Caco-2 (cell line): ENCODE measurements at regions of chr4 and their contacts with region 1.

Region 1: DNA sequence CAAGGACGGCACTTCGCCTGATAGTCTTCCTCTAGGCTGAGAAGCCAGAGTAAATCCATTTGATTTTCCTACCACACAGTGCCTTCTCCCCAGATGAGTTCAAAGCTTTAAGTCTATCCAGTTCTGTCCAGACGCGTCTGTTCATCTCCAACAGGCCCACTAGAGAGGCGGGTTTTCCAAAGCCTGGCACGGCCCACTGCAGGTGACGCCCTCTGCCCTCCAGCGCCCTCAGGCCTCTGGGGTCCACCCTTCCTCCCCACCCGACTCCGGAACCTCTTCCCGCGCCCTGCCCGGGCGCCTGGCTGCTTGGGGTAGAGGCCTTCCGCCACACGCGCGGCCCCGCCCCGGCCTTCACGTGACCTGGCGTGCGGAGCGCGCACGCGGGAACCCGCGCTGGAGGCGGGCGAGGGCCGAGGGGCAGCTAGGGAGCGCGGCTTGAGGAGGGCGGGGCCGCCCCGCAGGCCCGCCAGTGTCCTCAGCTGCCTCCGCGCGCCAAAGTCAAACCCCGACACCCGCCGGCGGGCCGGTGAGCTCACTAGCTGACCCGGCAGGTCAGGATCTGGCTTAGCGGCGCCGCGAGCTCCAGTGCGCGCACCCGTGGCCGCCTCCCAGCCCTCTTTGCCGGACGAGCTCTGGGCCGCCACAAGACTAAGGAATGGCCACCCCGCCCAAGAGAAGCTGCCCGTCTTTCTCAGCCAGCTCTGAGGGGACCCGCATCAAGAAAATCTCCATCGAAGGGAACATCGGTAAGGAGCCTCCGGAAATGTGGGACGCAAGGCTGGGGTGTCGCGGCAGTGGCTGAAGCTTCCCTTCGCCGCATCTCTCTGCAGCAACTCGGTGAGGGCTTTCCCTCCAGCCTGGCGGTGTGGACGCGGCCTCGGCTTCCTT is at the start of gene DCK:
- DNase-seq: peak; percentile 93 to 96
- H3K4me3 ChIP-seq: peak within 1 kb of the TSS; percentile 83
- H3K4me3 Mint-ChIP-seq: peak within 1 kb of the TSS; percentile 91
- H3K27ac Mint-ChIP-seq: peak within 1 kb of the TSS; percentile 88
- H3K4me1 ChIP-seq: peaks cover 9% of the 10 kb centered on the region
- H3K4me1 Mint-ChIP-seq: peaks cover 18% of the 10 kb centered on the region
- H3K27me3 ChIP-seq: no peaks in the 10 kb centered on the region
- H3K27me3 Mint-ChIP-seq: no peaks in the 10 kb centered on the region
- CTCF ChIP-seq: no peak
- total RNA-seq, gene DCK: 16.3 and 19.6 TPM in 2 replicates

Region 2: GRCh38 chr4:70601422-70602039 is 391.9 kb before region 1 on chr4:
- CTCF ChIA-PET with region 1: no interaction called
- POLR2A ChIA-PET with region 1: no interaction called
- intact Hi-C with region 1: loop called (anchors 10 kb)
- DNase-seq: peak; percentile 64 to 69
- H3K4me3 ChIP-seq: no peak overlapping the region
- H3K4me3 Mint-ChIP-seq: no peak overlapping the region
- H3K27ac Mint-ChIP-seq: no peak overlapping the region
- H3K4me1 ChIP-seq: peaks cover 4% of the 10 kb centered on the region; the same call in 1 of the 2 replicates
- H3K4me1 Mint-ChIP-seq: peaks cover 6% of the 10 kb centered on the region
- H3K27me3 ChIP-seq: no peaks in the 10 kb centered on the region
- H3K27me3 Mint-ChIP-seq: no peaks in the 10 kb centered on the region
- CTCF ChIP-seq: peak; percentile 64 to 73

Region 3: DNA sequence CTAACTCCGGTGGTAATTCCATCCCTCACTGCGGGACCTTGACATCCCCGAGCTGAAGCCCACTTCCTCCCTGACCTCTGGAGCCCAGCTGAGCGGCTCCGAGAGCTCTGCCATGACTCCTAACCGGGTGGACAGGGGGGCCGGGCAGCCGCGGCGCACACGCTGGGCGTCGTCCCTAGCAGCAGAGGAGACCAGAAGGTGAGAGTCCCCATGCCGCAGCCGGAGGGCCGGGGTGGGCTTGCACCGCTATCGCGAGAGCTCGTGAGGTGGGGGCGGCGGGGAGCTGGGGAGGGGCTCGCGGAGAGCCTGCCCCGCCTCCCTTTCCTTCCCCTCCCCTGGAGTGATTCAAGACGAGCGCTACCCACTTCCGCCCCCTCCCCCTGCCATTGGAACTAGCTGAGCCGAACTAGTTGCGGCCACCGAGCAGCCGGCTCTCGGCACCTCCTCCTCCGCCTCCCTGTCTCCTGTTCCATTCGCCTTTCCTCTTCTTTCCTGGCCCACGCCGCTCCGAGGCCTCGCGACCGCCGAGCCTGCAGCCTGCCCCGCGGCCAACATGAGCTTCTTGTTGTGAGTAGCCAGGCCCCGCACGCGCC is 91.3 kb before region 1 on chr4 and contains the start of gene MOB1B:
- CTCF ChIA-PET with region 1: no interaction called
- POLR2A ChIA-PET with region 1: interaction called, 5 read pairs
- intact Hi-C with region 1: loop called (anchors 1 kb)
- DNase-seq: peak; percentile 88 to 91
- H3K4me3 ChIP-seq: peak within 1 kb of the TSS; percentile 55
- H3K4me3 Mint-ChIP-seq: peak within 1 kb of the TSS; percentile 97
- H3K27ac Mint-ChIP-seq: peak within 1 kb of the TSS; percentile 94
- H3K4me1 ChIP-seq: no peaks in the 10 kb centered on the region
- H3K4me1 Mint-ChIP-seq: peaks cover 7% of the 10 kb centered on the region
- H3K27me3 ChIP-seq: no peaks in the 10 kb centered on the region
- H3K27me3 Mint-ChIP-seq: no peaks in the 10 kb centered on the region
- CTCF ChIP-seq: peak; percentile 45 to 53
- total RNA-seq, gene MOB1B: 23.3 and 23.6 TPM in 2 replicates

Region 4: GRCh38 chr4:70976252-70976651 is 17.2 kb before region 1 on chr4:
- CTCF ChIA-PET with region 1: no interaction called
- POLR2A ChIA-PET with region 1: no interaction called
- intact Hi-C with region 1: no loop called
- DNase-seq: no peak
- H3K4me3 ChIP-seq: no peak overlapping the region
- H3K4me3 Mint-ChIP-seq: no peak overlapping the region
- H3K27ac Mint-ChIP-seq: no peak overlapping the region
- H3K4me1 ChIP-seq: no peaks in the 10 kb centered on the region
- H3K4me1 Mint-ChIP-seq: peaks cover 7% of the 10 kb centered on the region
- H3K27me3 ChIP-seq: no peaks in the 10 kb centered on the region
- H3K27me3 Mint-ChIP-seq: no peaks in the 10 kb centered on the region
- CTCF ChIP-seq: no peak

Region 5: GRCh38 chr4:71009890-71010588 is 16.6 kb after region 1 on chr4:
- CTCF ChIA-PET with region 1: interaction called, 26 read pairs
- POLR2A ChIA-PET with region 1: interaction called, 22 read pairs
- intact Hi-C with region 1: loop called (anchors 2 kb)
- DNase-seq: peak in 1 of 2 experiments; percentile 43
- H3K4me3 ChIP-seq: no peak overlapping the region
- H3K4me3 Mint-ChIP-seq: no peak overlapping the region
- H3K27ac Mint-ChIP-seq: no peak overlapping the region
- H3K4me1 ChIP-seq: no peaks in the 10 kb centered on the region
- H3K4me1 Mint-ChIP-seq: no peaks in the 10 kb centered on the region
- H3K27me3 ChIP-seq: no peaks in the 10 kb centered on the region
- H3K27me3 Mint-ChIP-seq: no peaks in the 10 kb centered on the region
- CTCF ChIP-seq: peak; percentile 53 to 68